A673 (cell line): ENCODE measurements at regions of chr4 and their contacts with region 1.

Region 1: DNA sequence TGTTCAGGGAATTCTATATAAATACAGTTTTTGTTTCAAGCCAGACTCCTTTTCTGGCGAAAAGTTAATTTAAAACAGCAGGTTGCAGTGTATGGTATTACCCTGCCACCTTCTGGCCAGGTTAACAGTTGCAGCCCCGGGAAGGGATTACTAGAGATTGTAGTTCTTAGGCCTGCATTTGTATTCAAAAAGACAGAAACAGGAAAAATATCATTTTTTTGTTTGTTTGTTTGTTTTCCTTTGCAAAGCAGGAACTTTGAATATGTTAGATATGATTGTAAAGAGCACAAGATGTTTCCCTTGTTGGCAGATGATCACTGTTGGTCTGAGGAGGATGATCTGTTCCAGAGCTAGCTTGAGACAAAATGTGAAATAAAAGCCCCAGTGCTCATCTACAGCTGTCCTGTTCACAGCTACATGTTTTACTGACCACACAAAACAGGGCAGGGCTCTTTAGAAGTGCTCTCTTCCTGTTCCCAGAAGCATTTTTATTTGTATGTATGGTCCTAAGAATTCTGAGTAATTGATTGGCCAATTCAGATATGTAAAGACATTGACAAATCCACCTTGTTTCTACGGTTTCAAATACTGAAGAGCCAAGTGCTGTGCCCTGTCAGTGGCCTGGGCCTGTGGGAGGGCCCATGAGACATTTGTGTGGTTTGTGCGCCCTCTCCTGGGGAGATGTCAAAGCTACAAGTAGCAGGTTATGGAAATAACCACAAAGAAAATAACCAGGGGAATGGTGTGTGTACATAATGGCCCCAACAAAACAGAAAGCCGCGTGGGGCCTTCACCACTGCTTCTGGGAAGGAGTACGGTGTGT is 57.9 kb downstream of the CLDN22 start:
- DNase-seq: peak; percentile 89
- H3K4me3 ChIP-seq: no peak overlapping the region
- H3K27ac ChIP-seq: no peak overlapping the region
- H3K4me1 ChIP-seq: peaks cover 26% of the 10 kb centered on the region
- H3K27me3 ChIP-seq: no peaks in the 10 kb centered on the region
- CTCF ChIP-seq: peak; percentile 78

Region 2: DNA sequence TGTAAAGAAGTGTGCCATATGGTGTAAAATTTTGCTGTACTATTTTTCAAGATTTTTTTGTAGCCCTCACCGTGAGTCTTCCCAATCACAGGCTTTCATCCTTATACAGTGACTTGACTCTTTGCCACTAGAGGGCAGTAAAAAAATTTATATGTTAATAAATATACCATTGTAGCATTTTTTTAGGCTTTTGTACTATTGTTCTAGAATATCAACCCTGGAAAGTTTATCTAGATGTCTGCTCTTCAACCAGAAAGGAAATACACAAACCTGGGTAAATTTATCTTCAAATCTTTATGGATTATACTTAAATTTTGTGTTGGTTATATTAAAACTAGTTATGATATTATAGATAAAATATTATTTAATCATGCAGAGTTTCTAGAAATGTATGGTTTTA is 783.7 kb before region 1 on chr4:
- CTCF ChIA-PET with region 1: no interaction called
- POLR2A ChIA-PET with region 1: no interaction called
- intact Hi-C with region 1: loop called (anchors 5 kb)
- DNase-seq: peak; percentile 75
- H3K4me3 ChIP-seq: no peak overlapping the region
- H3K27ac ChIP-seq: no peak overlapping the region
- H3K4me1 ChIP-seq: no peaks in the 10 kb centered on the region
- H3K27me3 ChIP-seq: no peaks in the 10 kb centered on the region
- CTCF ChIP-seq: peak; percentile 74

Region 3: DNA sequence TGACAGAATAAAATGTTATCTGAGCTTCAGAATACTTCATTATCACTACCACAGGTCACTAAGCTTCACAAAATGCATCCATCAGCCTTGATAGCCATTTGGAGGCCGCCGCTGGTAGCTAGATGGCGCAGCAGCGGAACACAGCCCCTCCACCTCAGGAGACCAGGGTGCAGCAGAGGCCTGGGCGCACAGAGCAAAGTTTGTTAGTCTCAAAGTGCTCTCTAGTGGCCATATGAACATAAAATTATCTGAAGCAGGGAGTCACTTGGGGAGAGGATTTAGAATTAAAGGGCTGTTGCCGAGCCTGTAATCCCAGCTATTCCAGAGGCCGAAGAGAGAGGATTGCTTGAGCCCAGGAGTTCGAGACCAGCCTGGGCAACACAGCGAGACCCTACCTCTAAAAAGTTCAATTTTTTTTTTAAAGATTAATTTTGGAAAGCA is 336.8 kb before region 1 on chr4:
- CTCF ChIA-PET with region 1: interaction called, 13 read pairs
- POLR2A ChIA-PET with region 1: no interaction called
- intact Hi-C with region 1: no loop called
- DNase-seq: peak; percentile 91
- H3K4me3 ChIP-seq: no peak overlapping the region
- H3K27ac ChIP-seq: no peak overlapping the region
- H3K4me1 ChIP-seq: no peaks in the 10 kb centered on the region
- H3K27me3 ChIP-seq: no peaks in the 10 kb centered on the region
- CTCF ChIP-seq: peak; percentile 92

Region 4: GRCh38 chr4:182938205-182938645 is 323.9 kb before region 1 on chr4:
- CTCF ChIA-PET with region 1: interaction called, 44 read pairs
- POLR2A ChIA-PET with region 1: no interaction called
- intact Hi-C with region 1: loop called (anchors 1 kb)
- DNase-seq: peak; percentile 79
- H3K4me3 ChIP-seq: no peak overlapping the region
- H3K27ac ChIP-seq: no peak overlapping the region
- H3K4me1 ChIP-seq: no peaks in the 10 kb centered on the region
- H3K27me3 ChIP-seq: peaks cover 6% of the 10 kb centered on the region
- CTCF ChIP-seq: peak; percentile 97

Region 5: DNA sequence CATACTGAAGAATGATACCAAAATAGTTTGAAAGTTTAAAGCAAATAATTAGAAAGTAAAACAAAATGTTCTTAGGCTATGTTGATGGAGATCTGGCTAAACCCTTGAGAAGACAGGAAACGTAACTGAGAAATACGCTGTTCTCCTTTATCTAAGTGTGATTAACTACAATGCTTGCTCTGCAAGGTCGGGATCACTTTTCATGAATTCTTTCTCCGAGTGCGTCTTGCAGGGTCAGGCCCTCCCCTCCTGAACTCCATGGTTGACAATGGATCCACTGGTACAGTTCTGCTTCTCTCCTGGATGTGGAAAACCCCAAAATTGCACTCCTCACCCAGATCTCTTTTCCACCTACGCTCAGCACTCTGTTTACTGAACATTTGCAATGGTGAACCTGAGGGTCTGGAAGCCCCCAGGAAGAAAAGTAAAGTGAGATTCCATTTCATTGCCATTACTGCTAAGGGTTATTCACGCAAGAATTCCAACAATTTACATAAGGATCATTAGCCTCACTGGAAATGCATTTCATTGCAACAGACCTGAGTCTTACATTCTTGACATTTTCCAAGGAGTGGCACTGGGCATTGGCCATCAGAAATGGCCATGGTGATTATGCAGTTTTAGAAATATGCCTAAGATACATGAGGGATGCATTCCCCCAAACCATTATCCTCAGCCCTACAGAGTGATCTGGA is 187.7 kb before region 1 on chr4:
- CTCF ChIA-PET with region 1: interaction called, 6 read pairs
- POLR2A ChIA-PET with region 1: no interaction called
- intact Hi-C with region 1: loop called (anchors 1 kb)
- DNase-seq: no peak
- H3K4me3 ChIP-seq: no peak overlapping the region
- H3K27ac ChIP-seq: no peak overlapping the region
- H3K4me1 ChIP-seq: peaks cover 25% of the 10 kb centered on the region
- H3K27me3 ChIP-seq: no peaks in the 10 kb centered on the region
- CTCF ChIP-seq: no peak

Region 6: GRCh38 chr4:183398227-183399125 is 136.3 kb after region 1 on chr4:
- CTCF ChIA-PET with region 1: no interaction called
- POLR2A ChIA-PET with region 1: no interaction called
- intact Hi-C with region 1: loop called (anchors 2 kb)
- DNase-seq: peak; percentile 86
- H3K4me3 ChIP-seq: peak overlapping the region; percentile 20
- H3K27ac ChIP-seq: peak overlapping the region; percentile 88
- H3K4me1 ChIP-seq: peaks cover 43% of the 10 kb centered on the region
- H3K27me3 ChIP-seq: no peaks in the 10 kb centered on the region
- CTCF ChIP-seq: peak; percentile 65

Region 7: DNA sequence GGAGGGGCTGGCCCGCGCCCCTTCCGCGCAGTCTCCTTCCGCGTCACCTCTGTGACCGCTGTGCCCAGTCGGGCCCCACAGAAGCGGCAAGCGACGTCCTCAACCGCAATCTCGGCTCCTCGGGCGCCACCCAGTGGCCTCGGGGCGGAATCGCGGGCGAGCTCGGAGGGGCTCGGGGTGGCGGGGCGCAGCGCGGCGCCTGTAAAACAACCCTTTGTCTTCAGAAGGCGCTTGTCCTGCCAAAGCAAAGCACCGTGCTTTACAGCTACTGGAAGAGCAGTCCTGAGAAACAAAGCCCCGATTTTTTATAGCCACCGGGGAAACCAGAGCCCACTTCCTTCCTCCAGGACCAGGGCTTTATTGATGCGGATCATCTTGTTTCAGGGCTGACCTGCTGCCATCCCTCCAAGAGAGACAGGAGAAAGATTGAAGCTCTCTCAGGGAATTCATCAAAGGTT is 145.0 kb after region 1 on chr4:
- CTCF ChIA-PET with region 1: no interaction called
- POLR2A ChIA-PET with region 1: no interaction called
- intact Hi-C with region 1: loop called (anchors 1 kb)
- DNase-seq: peak; percentile 93
- H3K4me3 ChIP-seq: peak overlapping the region; percentile 54
- H3K27ac ChIP-seq: peak overlapping the region; percentile 81
- H3K4me1 ChIP-seq: peaks cover 27% of the 10 kb centered on the region
- H3K27me3 ChIP-seq: no peaks in the 10 kb centered on the region
- CTCF ChIP-seq: peak; percentile 96